ENCODE measurements at regions of chr22 and their contacts with region 1.

Region 1: GRCh38 chr22:46092646-46093410 is 57.5 kb upstream of the PPARA start:
- DNase-seq: peak; percentile 43
- ATAC-seq: no peak

Region 2: DNA sequence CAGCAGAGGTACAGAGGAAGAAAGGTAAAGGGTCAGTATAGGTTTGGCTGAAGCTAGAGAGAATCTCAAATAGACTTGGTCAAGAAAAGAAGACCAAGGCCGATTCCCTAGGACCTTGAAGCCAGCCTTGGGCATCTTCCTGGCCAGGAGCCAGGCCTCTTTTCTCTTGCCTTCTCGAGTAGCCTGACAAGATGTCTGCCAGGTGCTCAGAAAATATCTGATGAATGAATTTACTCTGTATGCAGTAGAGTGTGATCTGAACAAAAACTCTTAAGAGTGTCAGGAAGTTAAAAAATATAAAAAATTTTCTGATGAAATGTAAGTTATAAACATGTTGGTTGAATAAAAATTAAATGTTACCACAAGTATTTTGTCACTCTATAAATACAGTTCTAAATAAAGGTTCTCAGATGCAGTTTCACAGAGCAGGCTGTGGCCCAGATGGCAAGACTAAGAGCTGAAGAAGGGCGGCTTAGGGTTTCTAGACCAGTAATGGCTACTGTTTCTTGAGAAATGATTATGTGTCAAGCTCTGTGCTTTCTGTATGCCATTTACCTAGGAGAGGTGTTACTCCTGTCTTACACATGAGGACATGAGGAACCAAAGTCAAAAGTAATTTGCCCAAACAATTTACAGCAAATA is 323.1 kb before region 1 on chr22:
- intact Hi-C with region 1: no loop called
- DNase-seq: no peak
- ATAC-seq: no peak

Region 3: DNA sequence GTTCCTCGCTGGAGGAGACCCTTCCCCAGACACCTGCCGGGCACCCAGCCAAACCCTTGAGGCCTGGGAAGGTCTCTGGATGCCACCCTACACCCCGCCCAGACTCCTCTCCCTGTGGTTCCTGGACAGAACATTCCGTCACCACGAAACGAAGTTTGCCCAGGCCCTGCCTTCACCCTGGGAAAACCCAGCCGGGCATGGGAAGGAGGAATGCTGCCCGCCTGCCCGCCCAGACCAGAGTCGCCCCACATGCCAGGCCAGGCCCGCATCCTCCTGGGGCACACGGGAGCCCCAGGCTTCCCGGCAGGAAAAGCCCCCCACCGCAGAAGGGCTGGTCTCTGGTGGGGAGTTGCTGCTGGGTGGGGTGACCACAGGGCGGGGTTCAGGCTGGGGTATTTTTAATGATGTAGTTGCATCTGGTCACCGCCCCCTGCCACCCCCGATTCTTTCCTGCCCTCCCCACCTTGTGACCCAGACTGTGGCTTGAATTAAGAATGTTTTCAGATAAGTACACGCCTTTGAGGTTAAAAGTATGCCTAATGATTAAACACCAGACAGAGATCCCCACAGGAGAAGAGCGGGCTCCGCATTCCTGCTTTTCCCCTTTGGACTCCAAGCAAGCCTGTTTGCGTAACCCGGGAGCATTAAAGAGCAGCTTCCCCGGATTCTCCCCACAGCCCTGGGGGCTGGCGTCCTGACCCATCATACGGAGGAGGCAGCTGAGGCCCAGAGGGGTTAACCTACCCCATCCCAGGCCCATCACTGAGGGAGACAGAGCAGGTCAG is 12.9 kb after region 1 on chr22:
- intact Hi-C with region 1: loop called (anchors 2 kb)
- DNase-seq: no peak
- ATAC-seq: no peak

Region 4: DNA sequence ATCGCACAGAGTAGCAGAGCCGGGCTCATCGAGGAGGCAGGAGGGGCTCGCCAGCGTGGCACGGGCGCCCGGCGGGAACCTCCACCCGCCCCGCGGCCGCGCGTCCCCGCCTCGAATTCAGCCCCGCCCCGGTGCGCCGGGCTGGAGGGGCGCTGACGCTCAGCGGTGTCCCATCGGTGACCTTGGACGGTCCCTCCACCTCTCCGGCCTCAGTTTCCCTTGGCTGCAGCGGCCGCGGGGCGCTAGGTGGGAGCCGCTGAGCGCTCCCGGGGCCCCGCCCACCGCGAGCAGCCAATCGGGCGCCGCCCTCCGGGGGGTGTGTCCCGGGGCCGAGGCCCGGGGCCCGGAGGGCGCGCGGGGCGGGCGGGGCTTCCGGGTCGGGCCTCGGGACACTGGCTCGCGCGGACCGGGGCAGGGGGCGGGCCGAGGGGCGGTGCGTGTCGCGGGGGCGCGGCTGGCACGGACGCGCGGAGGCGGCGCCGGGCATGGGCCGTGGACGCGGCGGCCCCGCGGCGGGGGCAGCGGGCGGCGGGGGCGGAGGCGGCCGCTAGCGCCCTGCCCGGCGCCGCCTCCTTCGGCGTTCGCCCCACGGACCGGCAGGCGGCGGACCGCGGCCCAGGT is 57.3 kb after region 1 on chr22 and contains the start of gene PPARA:
- intact Hi-C with region 1: no loop called
- DNase-seq: peak; percentile 94
- ATAC-seq: peak; percentile 92
- total RNA-seq, gene PPARA: 70.5 TPM

Measured in Right ventricle myocardium inferior (tissue), 1 donor.